Heart left ventricle (tissue), 16 donors: ENCODE measurements at regions of chr13 and their contacts with region 1.

Region 1: GRCh38 chr13:36207672-36208071 is 6.7 kb downstream of the SOHLH2 start:
- DNase-seq: no peak
- ATAC-seq: no peak
- H3K4me3 ChIP-seq: no peak overlapping the region
- H3K27ac ChIP-seq: no peak overlapping the region
- H3K4me1 ChIP-seq: no peaks in the 10 kb centered on the region
- H3K27me3 ChIP-seq: no peaks in the 10 kb centered on the region
- CTCF ChIP-seq: peak in 2 of 12 donors; percentile 18 to 26
- POLR2A ChIP-seq: no peak

Region 2: DNA sequence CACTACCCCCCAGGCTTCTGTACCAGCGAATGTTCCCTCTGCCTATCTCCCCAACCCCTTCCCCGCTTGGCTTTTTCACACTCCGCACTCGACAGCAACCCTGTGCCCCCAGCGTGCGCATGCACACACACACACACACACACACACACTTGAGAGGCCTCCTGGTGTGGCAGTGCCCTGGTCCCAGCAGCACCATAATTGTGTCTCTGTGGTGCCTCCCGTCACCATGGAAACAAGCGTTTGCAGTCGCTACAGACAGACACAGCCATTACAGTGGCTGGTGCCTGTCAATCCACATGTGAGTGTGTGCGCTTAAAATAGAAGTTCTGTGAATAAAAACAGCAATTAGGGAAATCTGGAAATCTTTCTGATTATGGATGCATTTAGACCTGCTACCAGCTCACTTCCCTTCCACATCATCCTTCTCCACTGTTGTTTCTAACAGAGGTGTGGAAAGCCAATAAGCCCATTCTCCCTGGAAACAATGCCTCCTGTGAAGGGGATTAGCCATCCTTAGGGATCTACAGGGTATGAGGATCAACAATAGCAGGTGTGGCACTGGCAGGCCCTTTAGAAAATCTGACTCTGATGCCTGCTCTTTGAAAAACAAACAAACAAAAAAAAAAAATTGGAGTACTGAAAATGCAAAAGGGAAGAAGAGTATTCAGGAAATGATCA is 222.8 kb before region 1 on chr13:
- intact Hi-C with region 1: loop called in 1 of 10 experiments (anchors 10 kb)
- DNase-seq: no peak
- ATAC-seq: peak in 3 of 4 donors; percentile 28 to 43 (median 36)
- H3K4me3 ChIP-seq: no peak overlapping the region
- H3K27ac ChIP-seq: no peak overlapping the region
- H3K4me1 ChIP-seq: peaks cover 0 to 4% (median 0%) of the 10 kb centered on the region in 12 donors
- H3K27me3 ChIP-seq: no peaks in the 10 kb centered on the region
- CTCF ChIP-seq: no peak
- POLR2A ChIP-seq: no peak

Region 3: DNA sequence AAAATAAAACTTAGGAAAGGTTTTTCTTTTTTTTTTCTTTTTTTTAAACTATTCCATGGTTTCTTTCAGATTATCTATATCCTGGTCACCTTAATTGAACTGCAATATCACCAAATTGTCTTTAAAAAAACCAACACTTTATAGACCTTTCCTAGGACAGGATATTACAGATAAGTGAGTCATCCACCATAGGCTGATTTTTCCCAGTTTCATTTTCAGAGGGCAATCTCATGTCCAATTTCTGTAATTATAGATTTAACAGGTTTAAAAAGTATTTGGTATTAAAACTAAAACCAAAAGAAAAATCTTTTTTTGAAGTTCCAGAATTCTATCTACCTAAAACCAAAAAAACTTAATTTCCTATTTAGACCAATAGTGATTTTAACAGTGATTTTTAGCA is 125.3 kb after region 1 on chr13:
- intact Hi-C with region 1: no loop called
- DNase-seq: no peak
- ATAC-seq: no peak
- H3K4me3 ChIP-seq: no peak overlapping the region
- H3K27ac ChIP-seq: peak overlapping the region in 1 of 12 donors; percentile 18
- H3K4me1 ChIP-seq: peaks cover 0 to 45% (median 20%) of the 10 kb centered on the region in 12 donors
- H3K27me3 ChIP-seq: no peaks in the 10 kb centered on the region
- CTCF ChIP-seq: no peak
- POLR2A ChIP-seq: no peak